MCF 10A (cell line): ENCODE measurements at regions of chr12 and their contacts with region 1.

Region 1: DNA sequence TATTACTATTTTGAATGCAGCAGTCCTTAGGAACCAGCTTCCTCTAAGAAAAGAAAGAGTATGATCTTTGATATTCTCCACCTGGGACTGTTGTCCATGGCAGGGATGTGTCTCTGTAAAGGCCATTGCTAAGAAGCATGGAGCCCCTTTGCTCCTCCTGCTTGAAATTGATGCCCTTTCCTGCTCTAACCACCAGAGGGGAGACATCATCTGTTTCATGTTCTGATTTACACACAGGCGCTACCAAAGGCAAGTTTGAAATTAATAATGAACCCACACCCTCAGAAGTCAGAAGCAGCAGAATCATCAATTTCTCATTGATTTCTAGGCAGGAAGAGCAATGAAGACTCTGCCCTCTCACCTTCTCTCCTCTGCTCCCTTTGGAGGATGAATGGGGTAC is 253.8 kb downstream of the RMST start:
- DNase-seq: peak; percentile 27
- H3K4me3 Mint-ChIP-seq: no peak overlapping the region
- H3K27ac Mint-ChIP-seq: no peak overlapping the region
- H3K4me1 Mint-ChIP-seq: no peaks in the 10 kb centered on the region
- H3K27me3 Mint-ChIP-seq: no peaks in the 10 kb centered on the region
- CTCF ChIP-seq: peak; percentile 42

Region 2: GRCh38 chr12:97960754-97961608 is 244.6 kb after region 1 on chr12:
- CTCF ChIA-PET with region 1: interaction called, 3 read pairs
- POLR2A ChIA-PET with region 1: no interaction called
- intact Hi-C with region 1: loop called (anchors 1 kb)
- DNase-seq: peak; percentile 34
- H3K4me3 Mint-ChIP-seq: no peak overlapping the region
- H3K27ac Mint-ChIP-seq: no peak overlapping the region
- H3K4me1 Mint-ChIP-seq: no peaks in the 10 kb centered on the region
- H3K27me3 Mint-ChIP-seq: no peaks in the 10 kb centered on the region
- CTCF ChIP-seq: peak; percentile 52

Region 3: GRCh38 chr12:98137278-98137677 is 420.9 kb after region 1 on chr12:
- CTCF ChIA-PET with region 1: no interaction called
- POLR2A ChIA-PET with region 1: no interaction called
- intact Hi-C with region 1: no loop called
- DNase-seq: no peak
- H3K4me3 Mint-ChIP-seq: no peak overlapping the region
- H3K27ac Mint-ChIP-seq: no peak overlapping the region
- H3K4me1 Mint-ChIP-seq: no peaks in the 10 kb centered on the region
- H3K27me3 Mint-ChIP-seq: peaks cover 67% of the 10 kb centered on the region
- CTCF ChIP-seq: no peak

Region 4: DNA sequence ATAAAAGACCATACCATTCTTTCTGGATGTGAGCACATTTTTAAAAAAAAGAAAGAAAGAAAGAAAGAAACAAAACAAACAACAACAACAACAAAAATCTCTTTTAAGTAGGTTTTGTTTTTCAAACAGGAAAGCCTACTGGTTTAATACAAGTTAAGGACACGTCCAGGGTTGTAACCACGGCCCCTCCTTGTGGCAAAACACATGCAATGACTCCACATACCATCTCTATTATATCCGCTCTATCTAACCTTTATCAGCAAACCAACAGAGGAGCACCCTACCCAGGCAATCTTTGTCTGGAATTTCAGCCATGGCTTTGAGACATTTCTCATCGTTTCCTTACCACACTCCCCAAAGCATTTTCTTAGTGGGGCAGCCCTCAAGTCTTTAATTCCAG is 438.5 kb after region 1 on chr12:
- CTCF ChIA-PET with region 1: no interaction called
- POLR2A ChIA-PET with region 1: no interaction called
- intact Hi-C with region 1: loop called (anchors 10 kb)
- DNase-seq: peak; percentile 54
- H3K4me3 Mint-ChIP-seq: no peak overlapping the region
- H3K27ac Mint-ChIP-seq: no peak overlapping the region
- H3K4me1 Mint-ChIP-seq: no peaks in the 10 kb centered on the region
- H3K27me3 Mint-ChIP-seq: peaks cover 48% of the 10 kb centered on the region
- CTCF ChIP-seq: peak; percentile 18